Activated naive CD4-positive, alpha-beta T cell treated with anti-CD3 and anti-CD28 coated beads for 36 hours (primary cell): ENCODE measurements at regions of chr1 and their contacts with region 1.

Region 1: DNA sequence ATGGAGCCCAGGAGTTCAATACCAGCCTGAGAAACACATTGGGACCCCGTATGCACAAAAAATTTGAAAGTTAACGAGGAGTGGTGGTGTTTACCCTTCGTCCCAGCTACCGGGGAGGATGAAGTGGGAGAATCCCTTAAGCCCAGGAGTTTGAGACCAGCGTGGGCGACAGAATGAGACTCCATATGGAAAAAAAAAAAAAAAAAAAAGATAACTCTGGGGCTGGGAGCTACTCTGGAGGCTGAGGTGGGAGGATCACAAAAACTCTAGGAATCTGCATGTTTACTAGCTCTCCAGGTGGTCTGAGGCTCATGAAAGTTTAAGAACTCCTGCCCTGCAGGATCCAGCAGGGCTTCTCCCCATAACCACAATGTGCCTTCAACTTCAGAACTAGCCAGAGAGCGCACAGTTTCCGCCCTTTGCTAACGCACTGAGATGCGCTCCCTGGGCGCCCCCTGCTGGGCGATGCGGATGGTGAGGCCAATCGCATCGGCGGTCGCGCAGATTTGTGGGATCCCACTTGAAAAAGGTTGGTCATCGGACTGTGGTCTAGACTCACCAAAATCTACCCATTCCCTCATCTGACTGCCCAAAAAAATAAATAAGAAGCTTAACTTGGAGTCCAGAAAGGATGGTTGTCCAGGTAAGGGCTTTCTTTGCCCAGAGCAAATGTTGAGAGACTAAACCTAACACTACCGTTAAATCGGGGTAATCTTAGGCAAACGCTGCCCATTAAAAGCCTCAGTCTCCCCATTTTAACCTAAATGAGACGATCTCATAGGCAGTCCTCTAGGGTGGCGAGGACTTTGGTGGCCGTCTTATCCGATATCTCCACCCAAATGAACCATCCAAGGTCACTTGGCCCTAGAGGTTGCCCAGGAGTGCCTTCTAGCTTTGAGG is 8.8 kb downstream of the ZNF683 start:
- DNase-seq: peak; percentile 90
- H3K4me3 Mint-ChIP-seq: no peak overlapping the region
- H3K27ac Mint-ChIP-seq: no peak overlapping the region
- H3K4me1 Mint-ChIP-seq: peaks cover 32% of the 10 kb centered on the region
- H3K27me3 Mint-ChIP-seq: peaks cover 6% of the 10 kb centered on the region

Region 2: GRCh38 chr1:26378088-26378878 is 14.5 kb after region 1 on chr1:
- CTCF ChIA-PET with region 1: interaction called, 18 read pairs
- intact Hi-C with region 1: no loop called
- DNase-seq: peak; percentile 66
- H3K4me3 Mint-ChIP-seq: no peak overlapping the region
- H3K27ac Mint-ChIP-seq: peak overlapping the region; percentile 53
- H3K4me1 Mint-ChIP-seq: peaks cover 54% of the 10 kb centered on the region
- H3K27me3 Mint-ChIP-seq: no peaks in the 10 kb centered on the region

Region 3: DNA sequence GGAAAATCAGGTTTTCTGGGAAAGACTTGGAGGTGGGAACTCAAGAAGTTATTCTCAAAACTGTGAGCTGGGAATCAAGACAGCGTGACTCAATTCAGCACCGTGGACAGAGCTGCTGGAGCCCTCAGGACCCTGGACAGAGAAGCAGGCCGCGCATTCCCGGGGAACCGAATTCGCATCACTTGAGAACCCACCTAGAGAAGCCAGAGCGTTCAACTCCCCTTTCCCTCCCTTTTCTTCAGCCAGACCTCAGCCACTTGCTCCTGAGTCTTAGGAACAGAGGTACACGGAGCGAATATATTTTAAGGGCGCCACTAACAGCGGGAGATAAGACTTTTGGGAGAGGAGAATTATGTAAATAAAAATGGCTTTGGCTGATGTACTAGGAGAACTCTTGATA is 44.8 kb after region 1 on chr1:
- CTCF ChIA-PET with region 1: no interaction called
- intact Hi-C with region 1: no loop called
- DNase-seq: peak; percentile 86
- H3K4me3 Mint-ChIP-seq: no peak overlapping the region
- H3K27ac Mint-ChIP-seq: no peak overlapping the region
- H3K4me1 Mint-ChIP-seq: peaks cover 26% of the 10 kb centered on the region
- H3K27me3 Mint-ChIP-seq: peaks cover 46% of the 10 kb centered on the region